CD4-positive, alpha-beta memory T cell (primary cell): ENCODE measurements at regions of chr19 and their contacts with region 1.

Region 1: DNA sequence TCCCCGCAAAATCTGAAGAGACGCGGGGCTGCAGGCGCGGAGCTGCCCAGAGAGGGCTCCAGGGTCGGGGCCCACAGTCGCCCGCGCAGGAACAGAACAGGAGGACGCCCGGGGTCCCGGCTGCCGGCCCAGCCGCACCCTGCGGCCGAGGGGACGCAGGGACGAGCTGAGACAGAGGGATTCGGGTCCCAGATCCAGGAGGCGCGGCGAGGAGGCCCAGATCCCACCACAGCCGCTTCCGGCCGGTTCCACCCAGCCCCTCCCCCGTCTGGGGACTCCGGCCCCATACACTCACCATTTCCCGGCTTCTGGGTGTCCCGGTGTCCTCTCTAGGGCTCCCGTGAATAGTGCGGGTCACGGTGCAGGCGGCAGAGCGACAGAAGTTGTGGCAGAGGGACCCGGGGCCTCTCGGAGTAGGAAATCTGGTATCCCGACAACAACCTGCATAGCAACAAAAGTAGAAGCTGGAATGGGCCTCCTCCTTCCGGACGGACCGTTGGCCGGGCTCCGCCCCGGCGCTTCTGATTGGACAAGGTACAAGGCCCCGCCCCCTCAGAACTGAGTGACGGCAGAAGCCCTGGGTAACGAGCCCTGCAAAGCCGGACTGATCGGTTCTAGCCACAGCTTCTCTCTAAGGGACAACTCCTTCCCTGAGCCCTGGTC is at the start of gene ZNF20:
- DNase-seq: peak; percentile 76 to 86 (median 80)
- H3K4me3 ChIP-seq: peak within 1 kb of the TSS; percentile 66 to 86
- H3K4me3 Mint-ChIP-seq: peak within 1 kb of the TSS; percentile 81 to 95 (median 91)
- H3K27ac ChIP-seq: peak within 1 kb of the TSS; percentile 63
- H3K27ac Mint-ChIP-seq: peak within 1 kb of the TSS; percentile 58 to 93 (median 79)
- H3K4me1 ChIP-seq: peaks cover 26% of the 10 kb centered on the region
- H3K4me1 Mint-ChIP-seq: peaks cover 28 to 43% (median 33%) of the 10 kb centered on the region in 4 donors
- H3K27me3 ChIP-seq: no peaks in the 10 kb centered on the region
- H3K27me3 Mint-ChIP-seq: no peaks in the 10 kb centered on the region
- total RNA-seq, gene ZNF20: 4.0 to 7.4 TPM

Region 2: DNA sequence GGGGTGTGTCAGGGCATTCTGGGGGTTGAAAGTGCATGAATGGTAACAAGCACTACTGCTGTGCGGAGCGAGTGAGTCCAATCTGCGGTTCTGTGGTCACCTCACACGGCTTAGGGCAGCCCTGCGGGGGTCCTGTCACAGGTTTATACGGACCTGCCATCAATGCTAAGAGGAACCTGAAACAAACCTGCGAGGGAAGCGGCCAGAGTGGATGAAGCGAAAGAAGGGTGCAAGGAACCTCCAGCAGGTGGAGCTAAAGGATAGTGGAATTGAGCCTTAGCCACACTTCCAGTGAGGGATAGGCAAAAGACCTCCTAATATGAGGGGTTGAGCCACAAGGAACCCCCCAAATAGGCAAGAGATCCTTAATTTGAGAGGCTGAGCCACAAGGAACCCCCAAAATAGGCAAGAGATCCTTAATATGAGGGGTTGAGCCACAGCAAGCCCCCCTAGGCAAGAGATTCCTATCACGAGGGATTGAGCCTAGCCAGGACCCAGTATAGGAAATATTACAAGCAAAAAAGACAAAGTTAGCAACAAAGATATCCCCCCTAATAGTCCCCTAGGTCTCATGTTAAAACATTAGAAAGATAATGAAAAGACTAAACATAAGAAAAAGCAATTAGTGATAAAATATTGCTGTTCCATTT is 258.7 kb before region 1 on chr19:
- CTCF ChIA-PET with region 1: interaction called, 27 read pairs
- POLR2A ChIA-PET with region 1: interaction called, 3 read pairs
- intact Hi-C with region 1: loop called (anchors 1 kb)
- DNase-seq: peak; percentile 52 to 67 (median 59)
- H3K4me3 ChIP-seq: no peak overlapping the region
- H3K4me3 Mint-ChIP-seq: peak overlapping the region in 1 of 8 donors; percentile 24
- H3K27ac ChIP-seq: no peak overlapping the region
- H3K27ac Mint-ChIP-seq: no peak overlapping the region
- H3K4me1 ChIP-seq: peaks cover 3% of the 10 kb centered on the region
- H3K4me1 Mint-ChIP-seq: peaks cover 0 to 2% (median under 1%) of the 10 kb centered on the region in 4 donors
- H3K27me3 ChIP-seq: no peaks in the 10 kb centered on the region
- H3K27me3 Mint-ChIP-seq: peaks cover 0 to 1% of the 10 kb centered on the region in 2 donors

Region 3: GRCh38 chr19:11964858-11965645 is 175.0 kb before region 1 on chr19 and contains the start of gene ZNF763:
- CTCF ChIA-PET with region 1: interaction called, 21 read pairs
- POLR2A ChIA-PET with region 1: interaction called, 12 read pairs
- intact Hi-C with region 1: loop called (anchors 1 kb)
- DNase-seq: peak; percentile 83 to 93 (median 85)
- H3K4me3 ChIP-seq: peak within 1 kb of the TSS; percentile 79 to 86
- H3K4me3 Mint-ChIP-seq: peak within 1 kb of the TSS; percentile 93 to 98 (median 96)
- H3K27ac ChIP-seq: peak within 1 kb of the TSS; percentile 91
- H3K27ac Mint-ChIP-seq: peak within 1 kb of the TSS; percentile 92 to 97 (median 96)
- H3K4me1 ChIP-seq: peaks cover 21% of the 10 kb centered on the region
- H3K4me1 Mint-ChIP-seq: peaks cover 16 to 32% (median 26%) of the 10 kb centered on the region in 4 donors
- H3K27me3 ChIP-seq: no peaks in the 10 kb centered on the region
- H3K27me3 Mint-ChIP-seq: no peaks in the 10 kb centered on the region
- total RNA-seq, gene ZNF763: 14.3 to 16.4 TPM

Region 4: DNA sequence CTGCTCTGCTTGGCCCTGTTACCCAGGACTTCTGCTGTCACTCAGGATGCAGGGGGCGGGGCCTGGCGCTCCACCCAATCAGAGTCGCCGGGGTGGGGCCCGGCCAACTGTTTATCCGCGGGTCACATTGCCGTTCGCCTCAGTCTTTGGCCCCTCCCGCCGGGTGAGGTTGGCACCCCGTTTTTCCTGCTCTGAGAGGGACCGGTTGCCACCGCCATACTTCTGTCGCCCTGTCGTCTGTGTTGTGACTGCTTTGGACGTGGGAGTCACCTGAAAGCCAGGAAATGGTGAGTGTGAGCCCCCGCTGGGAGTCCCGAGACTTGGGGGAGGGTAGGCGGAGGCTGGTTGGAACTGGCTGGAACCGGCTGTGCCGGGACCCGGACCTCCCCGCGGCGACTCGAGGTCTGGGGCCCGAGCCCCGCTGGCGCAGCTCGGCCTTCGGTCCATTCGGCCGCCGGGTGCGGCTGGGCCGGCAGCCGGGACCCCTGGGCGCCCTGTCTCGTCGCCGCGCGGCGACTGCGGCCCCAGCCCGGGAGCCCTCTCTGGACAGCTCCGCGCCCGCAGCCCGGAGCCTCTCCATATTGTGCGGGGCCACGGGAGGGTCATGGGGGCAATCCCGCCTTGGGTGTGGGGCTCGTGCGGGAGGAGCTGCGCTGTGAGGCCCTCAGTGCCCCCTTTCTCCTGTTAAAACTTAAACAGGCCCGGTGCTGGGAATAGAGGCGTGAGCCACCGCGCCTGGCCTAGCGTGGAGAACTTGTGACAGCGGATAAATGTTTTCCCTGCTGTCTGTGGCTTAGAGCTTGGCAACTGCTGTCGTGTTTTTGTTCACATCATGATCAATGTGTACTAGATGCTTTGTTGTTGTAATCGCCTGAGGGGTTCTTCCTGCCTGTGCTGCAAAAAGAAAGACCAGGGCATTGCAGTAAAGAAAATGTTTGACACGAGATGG is 75.2 kb before region 1 on chr19 and contains the start of gene ZNF844:
- CTCF ChIA-PET with region 1: interaction called, 26 read pairs
- POLR2A ChIA-PET with region 1: interaction called, 7 read pairs
- intact Hi-C with region 1: no loop called
- DNase-seq: peak; percentile 48 to 62 (median 56)
- H3K4me3 ChIP-seq: peak within 1 kb of the TSS; percentile 57 to 71
- H3K4me3 Mint-ChIP-seq: peak within 1 kb of the TSS; percentile 83 to 90 (median 86)
- H3K27ac ChIP-seq: peak within 1 kb of the TSS; percentile 11
- H3K27ac Mint-ChIP-seq: peak within 1 kb of the TSS in 6 of 7 donors; percentile 47 to 87 (median 74)
- H3K4me1 ChIP-seq: peaks cover 7% of the 10 kb centered on the region
- H3K4me1 Mint-ChIP-seq: peaks cover 3 to 13% (median 8%) of the 10 kb centered on the region in 4 donors
- H3K27me3 ChIP-seq: no peaks in the 10 kb centered on the region
- H3K27me3 Mint-ChIP-seq: no peaks in the 10 kb centered on the region
- total RNA-seq, gene ZNF844: 8.8 to 9.8 TPM

Region 5: GRCh38 chr19:12075538-12076139 is 64.4 kb before region 1 on chr19:
- CTCF ChIA-PET with region 1: no interaction called
- POLR2A ChIA-PET with region 1: no interaction called
- intact Hi-C with region 1: no loop called
- DNase-seq: no peak
- H3K4me3 ChIP-seq: no peak overlapping the region
- H3K4me3 Mint-ChIP-seq: no peak overlapping the region
- H3K27ac ChIP-seq: no peak overlapping the region
- H3K27ac Mint-ChIP-seq: no peak overlapping the region
- H3K4me1 ChIP-seq: no peaks in the 10 kb centered on the region
- H3K4me1 Mint-ChIP-seq: peaks cover 0 to 4% (median 0%) of the 10 kb centered on the region in 4 donors
- H3K27me3 ChIP-seq: no peaks in the 10 kb centered on the region
- H3K27me3 Mint-ChIP-seq: no peaks in the 10 kb centered on the region

Region 6: GRCh38 chr19:12126707-12127106 is 13.3 kb before region 1 on chr19:
- CTCF ChIA-PET with region 1: interaction called, 10 read pairs
- POLR2A ChIA-PET with region 1: no interaction called
- intact Hi-C with region 1: no loop called
- DNase-seq: peak in 2 of 5 donors; percentile 7 to 12
- H3K4me3 ChIP-seq: no peak overlapping the region
- H3K4me3 Mint-ChIP-seq: no peak overlapping the region
- H3K27ac ChIP-seq: no peak overlapping the region
- H3K27ac Mint-ChIP-seq: no peak overlapping the region
- H3K4me1 ChIP-seq: no peaks in the 10 kb centered on the region
- H3K4me1 Mint-ChIP-seq: no peaks in the 10 kb centered on the region
- H3K27me3 ChIP-seq: no peaks in the 10 kb centered on the region
- H3K27me3 Mint-ChIP-seq: no peaks in the 10 kb centered on the region